Cardiac septum (tissue), 1 donor: ENCODE measurements at regions of chr14 and their contacts with region 1.

Region 1: GRCh38 chr14:34875031-34875922 is at the start of gene BAZ1A:
- DNase-seq: peak; percentile 84
- total RNA-seq, gene BAZ1A: 8.4 TPM

Region 2: GRCh38 chr14:34714320-34715126 is 160.8 kb before region 1 on chr14 and contains the start of gene CFL2:
- intact Hi-C with region 1: loop called (anchors 5 kb)
- DNase-seq: peak; percentile 91
- total RNA-seq, gene CFL2: 673 TPM

Region 3: GRCh38 chr14:34982417-34983147 is 107.3 kb after region 1 on chr14 and contains the start of gene SRP54:
- intact Hi-C with region 1: loop called (anchors 2 kb)
- DNase-seq: peak; percentile 99
- total RNA-seq, gene SRP54: 33.9 TPM